Activated CD4-positive, alpha-beta memory T cell treated with anti-CD3 and anti-CD28 coated beads for 36 hours (primary cell): ENCODE measurements at regions of chrX and their contacts with region 1.

Region 1: DNA sequence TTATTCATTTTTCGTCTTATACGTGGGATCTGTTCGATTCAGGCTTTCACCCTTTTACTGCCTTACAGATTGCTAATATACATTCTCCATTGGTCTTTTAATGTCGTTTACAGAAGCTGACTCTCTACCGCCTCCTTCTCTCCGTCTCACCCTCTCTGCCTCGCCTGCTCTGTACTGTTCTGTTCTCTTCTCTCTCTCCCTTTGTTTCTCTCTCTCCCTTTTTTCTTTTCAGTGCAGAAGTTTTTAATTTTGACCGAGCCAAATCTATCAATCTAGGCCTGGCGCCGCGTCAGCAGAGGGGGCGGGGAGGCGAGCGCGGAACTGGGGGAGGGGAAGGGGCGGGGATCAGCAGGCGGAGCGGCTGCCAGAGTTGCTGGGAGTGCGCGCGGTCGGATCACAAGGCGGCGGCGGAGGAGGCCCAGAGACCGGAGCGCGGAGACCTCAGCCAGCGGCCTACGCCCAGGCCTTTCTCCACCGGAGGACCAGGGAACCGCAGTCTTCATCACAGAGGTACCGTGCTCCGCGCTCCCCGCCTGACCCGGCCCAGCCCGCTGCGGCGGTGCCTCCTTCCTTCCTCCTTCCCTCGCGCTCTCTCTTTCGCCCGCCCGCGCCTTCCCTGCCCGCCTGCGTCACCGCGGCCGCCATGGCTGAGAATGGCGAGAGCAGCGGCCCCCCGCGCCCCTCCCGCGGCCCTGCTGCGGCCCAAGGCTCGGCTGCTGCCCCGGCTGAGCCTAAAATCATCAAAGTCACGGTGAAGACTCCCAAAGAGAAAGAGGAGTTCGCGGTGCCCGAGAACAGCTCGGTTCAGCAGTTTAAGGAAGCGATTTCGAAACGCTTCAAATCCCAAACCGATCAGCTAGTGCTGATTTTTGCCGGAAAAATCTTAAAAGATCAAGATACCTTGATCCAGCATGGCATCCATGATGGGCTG is at the start of gene UBQLN2:
- DNase-seq: peak; percentile 87
- H3K4me3 Mint-ChIP-seq: peak within 1 kb of the TSS; percentile 86
- H3K27ac Mint-ChIP-seq: peak within 1 kb of the TSS; percentile 98
- H3K4me1 Mint-ChIP-seq: peaks cover 3% of the 10 kb centered on the region
- H3K27me3 Mint-ChIP-seq: no peaks in the 10 kb centered on the region
- total RNA-seq, gene UBQLN2: 52.0 to 52.2 TPM

Region 2: DNA sequence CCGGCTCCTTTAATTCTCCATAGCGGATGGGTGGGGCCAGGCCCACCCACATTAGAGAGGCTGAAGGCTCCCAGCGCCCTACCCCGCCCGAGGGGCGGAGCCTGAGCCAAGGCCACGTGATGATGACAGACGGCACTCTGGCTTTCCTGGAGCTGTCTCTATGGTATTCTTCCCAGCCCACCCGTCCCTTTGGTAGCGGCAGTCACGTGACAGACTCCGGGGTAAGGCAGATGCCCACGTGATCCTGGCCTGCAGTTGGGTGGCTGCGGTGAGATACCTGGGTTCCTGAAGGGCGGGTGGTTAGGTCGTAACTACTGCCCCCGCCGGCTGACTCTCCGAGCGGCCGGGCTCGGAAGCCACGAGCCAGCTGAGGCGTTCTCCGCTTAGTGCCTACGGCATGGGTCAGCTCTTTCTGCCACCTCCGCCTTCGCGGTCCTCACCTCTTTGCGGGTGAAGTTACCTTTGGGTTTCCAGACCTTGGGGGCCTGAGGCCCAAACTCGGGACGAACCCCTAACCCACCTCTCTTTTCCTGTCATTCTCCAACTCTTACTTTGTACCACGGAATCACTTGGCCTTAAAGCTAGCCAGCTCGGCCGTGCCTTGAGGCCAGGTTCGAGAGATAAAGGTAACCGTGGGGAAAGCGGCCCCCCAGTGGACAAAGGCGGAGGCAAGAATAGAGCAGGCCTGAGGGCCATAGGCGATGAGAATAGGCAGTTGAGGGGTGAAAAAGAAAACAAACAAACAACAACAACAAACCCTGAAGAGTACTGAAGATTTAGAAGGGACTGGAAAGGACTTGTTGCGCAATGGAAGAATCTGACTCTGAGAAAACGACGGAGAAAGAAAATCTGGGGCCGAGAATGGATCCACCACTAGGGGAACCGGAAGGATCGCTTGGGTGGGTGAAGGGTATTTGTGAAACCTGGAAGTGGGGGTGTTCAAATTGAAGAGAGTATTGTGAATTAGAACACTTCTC is 845.7 kb before region 1 on chrX and contains the start of gene RRAGB:
- CTCF ChIA-PET with region 1: no interaction called
- POLR2A ChIA-PET with region 1: no interaction called
- intact Hi-C with region 1: loop called (anchors 10 kb)
- DNase-seq: peak; percentile 93
- H3K4me3 Mint-ChIP-seq: peak within 1 kb of the TSS; percentile 83
- H3K27ac Mint-ChIP-seq: peak within 1 kb of the TSS; percentile 87
- H3K4me1 Mint-ChIP-seq: peaks cover 35% of the 10 kb centered on the region
- H3K27me3 Mint-ChIP-seq: no peaks in the 10 kb centered on the region
- total RNA-seq, gene RRAGB: 4.9 to 5.3 TPM

Region 3: DNA sequence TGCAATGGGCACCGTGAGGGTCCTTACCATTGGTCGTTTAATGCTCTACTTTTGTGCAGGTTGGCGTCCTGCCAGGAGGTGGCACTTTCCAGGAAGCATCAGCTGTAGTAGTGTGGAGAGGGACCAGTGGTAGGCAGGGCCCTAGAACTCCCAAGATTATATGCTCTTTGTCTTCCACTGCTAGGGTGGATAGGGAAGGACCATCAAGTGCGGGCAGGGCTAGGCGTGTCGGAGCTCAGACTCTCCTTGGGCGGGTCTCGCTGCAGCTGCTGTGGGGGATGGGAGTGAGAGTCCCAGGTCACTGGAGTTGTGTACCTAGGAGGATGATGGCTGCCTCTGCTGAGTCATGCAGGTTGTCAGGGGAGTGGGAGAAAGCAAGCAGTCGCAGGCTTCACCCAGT is 196.6 kb before region 1 on chrX:
- CTCF ChIA-PET with region 1: no interaction called
- POLR2A ChIA-PET with region 1: interaction called, 3 read pairs
- intact Hi-C with region 1: loop called (anchors 1 kb)
- DNase-seq: peak; percentile 27
- H3K4me3 Mint-ChIP-seq: no peak overlapping the region
- H3K27ac Mint-ChIP-seq: peak overlapping the region; percentile 38
- H3K4me1 Mint-ChIP-seq: peaks cover 57% of the 10 kb centered on the region
- H3K27me3 Mint-ChIP-seq: no peaks in the 10 kb centered on the region

Region 4: GRCh38 chrX:56462389-56462788 is 101.1 kb before region 1 on chrX:
- CTCF ChIA-PET with region 1: no interaction called
- POLR2A ChIA-PET with region 1: no interaction called
- intact Hi-C with region 1: loop called (anchors 5 kb)
- DNase-seq: no peak
- H3K4me3 Mint-ChIP-seq: no peak overlapping the region
- H3K27ac Mint-ChIP-seq: peak overlapping the region; percentile 58
- H3K4me1 Mint-ChIP-seq: peaks cover 15% of the 10 kb centered on the region
- H3K27me3 Mint-ChIP-seq: no peaks in the 10 kb centered on the region

Region 5: DNA sequence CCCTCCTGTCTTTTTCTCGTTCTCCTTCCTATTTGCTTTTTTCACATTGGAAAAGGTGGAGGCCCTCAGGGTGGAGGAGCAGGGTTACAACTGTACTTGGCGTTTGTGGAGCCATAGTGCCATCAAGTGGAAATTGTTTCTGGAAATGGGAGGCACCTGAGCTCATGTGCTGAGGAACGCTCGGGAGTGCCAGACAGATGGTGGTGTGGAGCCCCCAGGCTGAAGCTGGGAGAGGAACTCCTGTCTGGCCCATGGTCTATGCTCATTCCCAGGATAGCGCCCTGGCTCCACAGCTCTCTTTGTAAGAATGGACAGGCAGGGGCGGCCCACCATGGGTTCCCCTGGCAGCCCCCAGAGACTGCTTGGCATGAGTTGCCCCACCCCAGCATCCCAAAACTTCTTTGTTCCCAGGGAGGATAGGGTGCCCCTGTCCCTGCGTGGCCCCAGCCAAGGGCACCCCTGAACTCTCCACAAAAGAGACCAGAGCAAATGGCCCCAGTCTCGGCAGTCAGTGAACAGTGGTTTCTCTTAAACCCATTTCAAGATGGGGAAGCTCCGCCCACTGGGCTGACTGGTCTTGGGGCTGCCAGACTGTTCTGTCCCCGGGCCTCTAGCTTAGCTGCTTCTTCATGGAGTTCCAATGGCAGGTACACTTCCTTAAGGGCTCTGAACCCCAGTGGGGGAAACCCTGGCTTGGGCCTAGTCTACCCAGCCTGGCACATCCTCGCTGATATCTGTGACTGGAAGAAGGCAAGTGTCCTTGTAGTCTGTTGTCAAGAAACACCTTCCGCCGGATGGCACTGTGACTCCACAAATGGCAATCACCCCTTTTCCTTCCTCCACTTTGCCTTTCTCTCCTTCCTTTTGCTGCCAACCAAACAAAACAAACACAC is 235.6 kb after region 1 on chrX:
- CTCF ChIA-PET with region 1: no interaction called
- POLR2A ChIA-PET with region 1: no interaction called
- intact Hi-C with region 1: no loop called
- DNase-seq: no peak
- H3K4me3 Mint-ChIP-seq: no peak overlapping the region
- H3K27ac Mint-ChIP-seq: peak overlapping the region; percentile 31
- H3K4me1 Mint-ChIP-seq: peaks cover 50% of the 10 kb centered on the region
- H3K27me3 Mint-ChIP-seq: no peaks in the 10 kb centered on the region

Region 6: GRCh38 chrX:56813318-56813837 is 249.9 kb after region 1 on chrX:
- CTCF ChIA-PET with region 1: no interaction called
- POLR2A ChIA-PET with region 1: no interaction called
- intact Hi-C with region 1: loop called (anchors 5 kb)
- DNase-seq: peak; percentile 69
- H3K4me3 Mint-ChIP-seq: peak overlapping the region; percentile 68
- H3K27ac Mint-ChIP-seq: peak overlapping the region; percentile 93
- H3K4me1 Mint-ChIP-seq: peaks cover 42% of the 10 kb centered on the region
- H3K27me3 Mint-ChIP-seq: no peaks in the 10 kb centered on the region